Dorsolateral prefrontal cortex (tissue), 120 donors: ENCODE measurements at regions of chr14 and their contacts with region 1.

Region 1: DNA sequence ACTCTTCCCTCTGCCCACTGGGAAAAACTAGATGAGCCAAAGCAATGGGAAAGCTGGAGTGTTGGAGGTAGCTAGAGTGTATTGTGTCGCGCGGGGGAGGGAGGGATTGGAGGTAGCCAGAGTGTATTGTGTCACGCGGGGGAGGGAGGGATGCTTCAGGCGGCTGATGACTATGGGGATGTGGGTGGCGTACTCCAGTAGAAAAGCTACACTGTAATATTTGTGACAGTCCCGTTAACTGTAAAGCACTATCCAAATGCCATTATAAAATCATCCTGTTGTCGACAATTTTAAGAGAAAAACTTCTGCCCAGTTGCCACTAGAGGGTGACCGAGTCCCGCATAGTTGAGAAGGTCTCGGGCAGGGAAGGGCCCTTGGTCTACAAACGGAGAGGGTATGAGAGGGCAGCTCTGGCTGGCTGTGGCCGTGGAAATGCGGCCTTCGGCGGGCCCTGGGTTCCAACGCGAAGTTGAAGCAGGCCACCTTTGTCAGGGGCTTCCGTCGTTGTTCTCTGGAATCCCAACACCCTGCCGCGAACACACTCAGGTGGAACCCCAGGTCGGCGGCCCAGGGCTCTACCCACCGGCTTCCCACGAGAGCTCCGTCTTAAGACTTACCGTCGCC is 15.1 kb upstream of the PLEK2 start:
- DNase-seq: peak; percentile 49 to 82 (median 76)
- H3K4me3 ChIP-seq: peak overlapping the region in 43 of 59 donors; percentile 0 to 47 (median 29)
- H3K27ac ChIP-seq: peak overlapping the region in 5 of 59 donors; percentile 5 to 39 (median 29)
- H3K27me3 ChIP-seq: no peaks in the 10 kb centered on the region
- CTCF ChIP-seq: peak; percentile 69 to 90 (median 83)

Region 2: GRCh38 chr14:67191768-67192290 is 235.3 kb before region 1 on chr14:
- intact Hi-C with region 1: no loop called
- DNase-seq: no peak
- H3K4me3 ChIP-seq: peak overlapping the region in 43 of 59 donors; percentile 2 to 54 (median 26)
- H3K27ac ChIP-seq: peak overlapping the region in 13 of 59 donors; percentile 1 to 65 (median 28)
- H3K27me3 ChIP-seq: no peaks in the 10 kb centered on the region
- CTCF ChIP-seq: no peak

Region 3: DNA sequence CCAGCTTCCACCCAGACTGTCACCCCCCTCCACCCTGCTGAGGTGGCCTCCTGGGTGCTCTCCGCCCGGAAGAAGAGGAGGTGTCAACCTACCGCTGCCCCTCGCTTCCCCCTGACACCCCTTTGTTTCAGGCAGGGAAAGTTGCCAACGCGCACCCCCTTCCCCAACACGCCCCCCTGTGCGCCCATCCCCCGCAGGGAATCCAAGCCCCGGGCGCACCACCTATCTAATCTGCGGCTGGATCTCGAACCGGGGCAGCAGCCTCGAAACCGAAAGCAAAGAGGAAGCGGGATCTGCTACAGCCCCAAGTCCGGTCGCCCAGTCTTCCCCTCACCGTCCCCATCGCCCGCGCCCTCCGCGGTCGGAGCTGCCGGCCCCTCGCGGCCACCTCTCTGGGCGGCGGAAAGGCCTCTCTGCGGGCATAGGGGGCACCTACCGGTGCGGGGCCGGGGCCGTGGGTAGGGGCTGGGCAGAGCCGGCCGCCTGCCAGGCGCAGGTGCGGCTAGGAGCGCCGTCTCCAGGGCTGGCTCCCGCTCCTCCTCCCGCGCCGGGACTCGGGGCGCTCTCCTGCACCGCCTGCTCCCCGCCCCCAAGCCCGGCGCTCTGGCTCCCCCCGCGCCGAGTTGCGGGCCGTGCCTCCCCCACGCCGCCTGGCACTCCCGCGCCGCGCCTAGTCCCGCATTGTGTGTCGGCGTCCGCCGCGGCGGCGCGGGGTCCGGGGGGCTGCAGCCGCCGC is 87.7 kb after region 1 on chr14:
- intact Hi-C with region 1: loop called (anchors 5 kb)
- DNase-seq: peak in 6 of 10 donors; percentile 37 to 68 (median 56)
- H3K4me3 ChIP-seq: peak overlapping the region; percentile 56 to 98 (median 90)
- H3K27ac ChIP-seq: peak overlapping the region in 56 of 59 donors; percentile 12 to 93 (median 79)
- H3K27me3 ChIP-seq: no peaks in the 10 kb centered on the region
- CTCF ChIP-seq: peak in 3 of 56 donors; percentile 9 to 42 (median 24)

Region 4: DNA sequence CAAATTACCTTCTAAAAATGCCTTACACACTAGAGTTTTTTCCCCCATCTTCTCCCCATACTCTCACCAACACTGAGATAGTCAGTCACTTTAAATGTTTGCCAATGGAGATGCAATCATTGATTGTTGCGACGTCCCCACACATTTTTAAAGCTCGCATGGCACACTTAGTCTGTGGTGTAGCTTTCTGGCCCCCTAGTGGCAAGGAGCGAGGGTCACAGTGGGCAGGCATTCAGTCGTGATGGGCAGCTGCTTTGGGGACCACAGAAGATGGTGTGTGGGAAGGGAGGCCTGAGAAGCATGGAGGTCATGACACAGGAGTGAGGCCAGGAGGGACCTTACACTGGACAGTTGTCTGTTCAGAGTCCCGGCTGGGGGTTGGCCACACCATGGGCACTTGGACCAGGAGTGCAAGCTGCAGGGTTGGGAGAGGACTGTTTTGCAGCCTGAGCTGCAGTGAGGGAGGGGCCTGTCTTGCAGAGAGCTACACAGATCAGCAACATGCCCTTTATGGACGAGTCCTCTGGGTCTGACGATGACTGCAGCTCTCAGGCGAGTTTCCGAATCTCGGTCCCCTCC is 144.3 kb after region 1 on chr14:
- intact Hi-C with region 1: loop called (anchors 2 to 5 kb)
- DNase-seq: peak in 9 of 10 donors; percentile 63 to 79 (median 75)
- H3K4me3 ChIP-seq: no peak overlapping the region
- H3K27ac ChIP-seq: peak overlapping the region in 48 of 59 donors; percentile 2 to 90 (median 74)
- H3K27me3 ChIP-seq: no peaks in the 10 kb centered on the region
- CTCF ChIP-seq: peak; percentile 53 to 91 (median 84)

Region 5: GRCh38 chr14:67674481-67675169 is 247.5 kb after region 1 on chr14 and contains the start of gene VTI1B:
- intact Hi-C with region 1: loop called in 1 of 2 experiments (anchors 10 kb)
- DNase-seq: peak; percentile 57 to 87 (median 76)
- H3K4me3 ChIP-seq: peak within 1 kb of the TSS; percentile 78 to 100 (median 94)
- H3K27ac ChIP-seq: peak within 1 kb of the TSS; percentile 93 to 100 (median 99)
- H3K27me3 ChIP-seq: no peaks in the 10 kb centered on the region
- CTCF ChIP-seq: peak in 30 of 56 donors; percentile 1 to 51 (median 19)
- total RNA-seq, gene VTI1B: 101 to 177 (median 140) TPM

Region 6: GRCh38 chr14:67704484-67705089 is 277.5 kb after region 1 on chr14:
- intact Hi-C with region 1: loop called (anchors 5 to 10 kb)
- DNase-seq: peak in 2 of 10 donors; percentile 15 to 33
- H3K4me3 ChIP-seq: peak overlapping the region in 17 of 59 donors; percentile 0 to 43 (median 15)
- H3K27ac ChIP-seq: peak overlapping the region in 44 of 59 donors; percentile 9 to 84 (median 57)
- H3K27me3 ChIP-seq: no peaks in the 10 kb centered on the region
- CTCF ChIP-seq: peak; percentile 40 to 88 (median 76)

Region 7: DNA sequence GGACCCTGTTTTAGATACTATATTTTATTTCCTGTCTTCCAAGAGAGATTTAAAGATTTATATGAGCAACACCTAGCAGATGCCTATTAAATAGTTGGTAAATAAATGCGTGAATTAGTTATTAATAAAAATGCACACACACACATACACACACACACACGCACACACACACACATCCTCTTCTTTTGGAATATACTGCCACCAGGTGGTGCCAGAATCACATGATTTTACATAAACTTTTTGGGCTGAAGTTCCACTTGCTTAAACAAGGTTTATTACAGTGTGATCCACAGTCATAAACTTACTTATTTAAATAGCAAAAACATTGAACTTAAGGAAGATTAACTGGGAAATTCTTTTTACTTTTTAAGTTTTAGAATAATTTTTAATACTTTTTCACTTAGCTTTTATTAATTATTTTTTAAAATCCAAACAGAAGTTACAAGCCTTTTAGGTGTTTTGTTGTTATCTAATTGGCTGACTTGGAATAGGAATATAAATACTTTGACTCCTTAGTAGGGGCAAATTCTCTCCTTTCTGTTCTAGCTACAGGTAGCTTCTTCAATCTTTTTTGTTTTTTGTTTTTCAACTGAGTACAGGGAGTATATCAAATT is 410.0 kb after region 1 on chr14:
- intact Hi-C with region 1: no loop called
- DNase-seq: no peak
- H3K4me3 ChIP-seq: no peak overlapping the region
- H3K27ac ChIP-seq: no peak overlapping the region
- H3K27me3 ChIP-seq: no peaks in the 10 kb centered on the region
- CTCF ChIP-seq: peak in 55 of 56 donors; percentile 26 to 69 (median 46)